ENCODE measurements at regions of chr6 and their contacts with region 1.

Region 1: DNA sequence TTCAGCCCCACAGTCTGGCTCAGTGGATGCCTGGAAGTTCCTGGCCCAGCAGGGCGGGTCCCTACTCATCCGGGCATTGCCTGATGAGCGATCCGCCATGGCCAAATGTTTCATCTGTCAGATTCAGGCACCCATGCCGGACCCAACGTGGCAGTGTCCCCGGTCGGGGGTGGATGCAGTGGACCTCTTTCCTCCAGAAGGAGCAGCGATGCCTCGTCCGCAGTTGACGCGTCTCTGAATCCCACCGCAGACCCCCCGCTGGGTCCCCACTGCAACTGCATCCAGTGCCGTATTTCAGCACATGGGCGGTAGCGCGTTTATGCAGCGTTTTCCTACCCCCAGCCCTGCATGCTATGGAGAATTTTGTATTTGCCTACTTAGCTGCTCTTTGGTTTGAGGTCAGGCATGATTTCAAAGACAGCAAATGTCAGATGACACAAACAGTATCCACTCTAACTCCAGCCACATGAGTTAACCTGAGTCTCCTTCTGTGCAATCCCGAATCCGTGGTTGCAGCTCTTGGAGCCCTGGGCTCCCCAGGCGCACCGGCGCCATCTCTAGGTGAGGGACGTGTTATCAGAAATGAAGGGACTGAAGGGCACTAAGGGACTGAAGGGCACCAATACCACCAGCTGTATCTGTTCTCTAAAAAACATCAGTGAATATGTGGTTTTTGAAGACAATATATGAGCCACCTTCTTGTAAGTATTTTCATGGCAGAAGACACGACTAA is 72.6 kb upstream of the THBS2 start:
- DNase-seq: peak; percentile 75
- ATAC-seq: peak; percentile 94
- H3K4me3 Mint-ChIP-seq: no peak overlapping the region
- H3K27ac Mint-ChIP-seq: no peak overlapping the region
- H3K4me1 Mint-ChIP-seq: peaks cover 8% of the 10 kb centered on the region
- H3K27me3 Mint-ChIP-seq: no peaks in the 10 kb centered on the region; the same call in 1 of the 2 replicates
- CTCF ChIP-seq: no peak

Region 2: DNA sequence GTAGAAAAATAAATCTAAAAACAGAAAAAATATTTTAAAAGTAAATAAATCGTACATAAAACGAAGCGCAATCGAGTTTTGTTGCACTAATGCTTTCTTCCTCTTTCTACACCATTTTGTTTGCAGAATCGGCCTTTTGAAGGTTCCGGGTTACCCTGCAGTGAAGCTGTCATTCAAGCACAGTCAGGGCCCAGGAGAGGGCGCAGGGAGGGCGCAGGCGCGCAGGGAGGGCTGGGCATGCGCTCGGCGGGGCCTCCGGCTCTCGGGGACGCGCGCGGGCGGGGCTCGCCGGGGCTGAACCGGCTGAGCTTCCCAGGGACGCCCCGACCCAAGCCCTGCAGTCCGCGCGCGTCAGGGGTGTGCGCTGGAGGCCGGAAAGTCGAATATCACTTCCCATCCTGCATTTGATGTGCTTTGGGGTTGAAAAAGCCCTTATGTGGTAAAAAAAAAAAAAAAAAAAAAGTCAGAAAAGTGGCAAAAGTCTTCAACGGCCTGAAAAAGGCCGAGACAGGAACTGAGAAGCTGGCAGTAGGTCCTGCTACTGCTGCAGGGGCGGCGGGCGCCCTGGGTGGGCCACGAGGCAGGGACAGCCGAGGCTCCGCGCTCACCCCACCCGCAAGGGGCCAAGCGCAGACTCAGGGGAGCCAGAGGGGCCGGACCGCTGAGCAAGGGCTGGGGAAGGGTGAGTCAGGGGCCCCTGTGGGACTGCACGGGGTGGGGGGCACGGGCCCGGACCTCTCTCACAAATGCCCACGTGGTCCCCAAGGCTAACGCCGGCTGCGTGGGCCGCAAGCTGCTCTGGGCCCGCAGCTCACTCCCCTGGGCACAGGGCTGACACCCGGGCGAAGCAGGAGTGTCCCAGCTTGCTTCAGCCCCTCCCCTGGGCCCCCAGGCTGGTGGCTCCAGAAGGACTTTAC is 113.1 kb before region 1 on chr6:
- CTCF ChIA-PET with region 1: interaction called, 10 read pairs
- POLR2A ChIA-PET with region 1: no interaction called
- DNase-seq: peak; percentile 84
- ATAC-seq: peak; percentile 98
- H3K4me3 Mint-ChIP-seq: peak overlapping the region; percentile 44
- H3K27ac Mint-ChIP-seq: no peak overlapping the region
- H3K4me1 Mint-ChIP-seq: peaks cover 6% of the 10 kb centered on the region
- H3K27me3 Mint-ChIP-seq: no peaks in the 10 kb centered on the region
- CTCF ChIP-seq: no peak

Region 3: GRCh38 chr6:169253337-169254238 is 72.6 kb before region 1 on chr6 and contains the start of gene THBS2:
- CTCF ChIA-PET with region 1: interaction called, 10 read pairs
- POLR2A ChIA-PET with region 1: no interaction called
- DNase-seq: no peak
- ATAC-seq: peak; percentile 43
- H3K4me3 Mint-ChIP-seq: peak within 1 kb of the TSS; percentile 80
- H3K27ac Mint-ChIP-seq: 0 out of 2 replicates have a peak within 1 kb of the TSS, but pooled peaks have one; percentile 91
- H3K4me1 Mint-ChIP-seq: peaks cover 60% of the 10 kb centered on the region
- H3K27me3 Mint-ChIP-seq: peaks cover 21% of the 10 kb centered on the region
- CTCF ChIP-seq: no peak
- total RNA-seq, gene THBS2: 33.5 to 40.3 TPM (median 35.8 TPM) in 3 replicates